K562 (cell line): ENCODE measurements at regions of chr1 and their contacts with region 1.

Region 1: GRCh38 chr1:67635055-67635809 is 49.8 kb upstream of the GADD45A start:
- DNase-seq: no peak
- ATAC-seq: no peak
- H3K4me3 ChIP-seq: no peak overlapping the region
- H3K27ac ChIP-seq: no peak overlapping the region; the same call in 2 of the 3 replicates
- H3K4me1 ChIP-seq: peaks cover 0 to 2% of the 10 kb centered on the region in 2 experiments; a peak in 3 of 5 replicates
- H3K27me3 ChIP-seq: no peaks in the 10 kb centered on the region
- CTCF ChIP-seq: no peak
- EP300 ChIP-seq: no peak
- POLR2A ChIP-seq: no peak
- RAD21 ChIP-seq: no peak; a peak in 1 of 4 replicates

Region 2: GRCh38 chr1:67646145-67647035 is 11.2 kb after region 1 on chr1:
- CTCF ChIA-PET with region 1: no interaction called
- POLR2A ChIA-PET with region 1: interaction called, 10 read pairs
- in situ Hi-C with region 1: no loop called
- intact Hi-C with region 1: no loop called
- DNase-seq: peak; percentile 76 to 81 (median 80)
- ATAC-seq: peak; percentile 93
- H3K4me3 ChIP-seq: no peak overlapping the region
- H3K27ac ChIP-seq: peak overlapping the region; percentile 77
- H3K4me1 ChIP-seq: peaks cover 19 to 25% of the 10 kb centered on the region in 2 experiments
- H3K27me3 ChIP-seq: no peaks in the 10 kb centered on the region
- CTCF ChIP-seq: no peak
- EP300 ChIP-seq: peak; percentile 63
- POLR2A ChIP-seq: no peak
- RAD21 ChIP-seq: peak in 1 of 2 experiments; percentile 34; a peak in 2 of 4 replicates